ENCODE measurements at regions of chr6 and their contacts with region 1.

Region 1: GRCh38 chr6:4358414-4359114 is 223.2 kb upstream of the ECI2 start:
- DNase-seq: peak; percentile 74
- H3K4me3 ChIP-seq: no peak overlapping the region
- H3K27ac ChIP-seq: peak overlapping the region in 1 of 2 donors; percentile 54
- H3K4me1 ChIP-seq: no peaks in the 10 kb centered on the region
- H3K27me3 ChIP-seq: no peaks in the 10 kb centered on the region
- CTCF ChIP-seq: no peak
- POLR2A ChIP-seq: no peak

Region 2: GRCh38 chr6:4460586-4461475 is 102.3 kb after region 1 on chr6:
- intact Hi-C with region 1: loop called (anchors 10 kb)
- DNase-seq: peak; percentile 49
- H3K4me3 ChIP-seq: no peak overlapping the region
- H3K27ac ChIP-seq: peak overlapping the region; percentile 29 to 36
- H3K4me1 ChIP-seq: no peaks in the 10 kb centered on the region
- H3K27me3 ChIP-seq: no peaks in the 10 kb centered on the region
- CTCF ChIP-seq: no peak
- POLR2A ChIP-seq: no peak

Region 3: DNA sequence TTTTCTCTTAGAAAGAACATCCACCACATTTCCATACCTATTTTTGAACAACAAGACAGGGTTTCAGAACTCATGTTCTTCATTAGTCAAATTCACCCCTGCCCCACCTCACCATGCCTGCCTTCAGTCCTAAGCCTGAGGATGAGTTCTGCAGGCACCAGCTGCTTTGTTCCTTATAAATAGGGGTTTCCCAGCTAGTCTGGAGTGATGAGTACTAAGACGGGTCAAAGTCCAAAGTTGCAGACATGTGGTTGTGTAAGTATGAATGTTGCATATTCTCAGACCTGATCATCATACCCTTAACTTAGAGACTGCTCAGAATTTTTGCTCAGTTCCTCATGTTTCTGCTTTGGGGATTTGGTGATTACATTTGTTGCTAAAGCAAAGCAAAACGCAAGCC is 159.9 kb after region 1 on chr6:
- intact Hi-C with region 1: no loop called
- DNase-seq: no peak
- H3K4me3 ChIP-seq: no peak overlapping the region
- H3K27ac ChIP-seq: no peak overlapping the region
- H3K4me1 ChIP-seq: no peaks in the 10 kb centered on the region
- H3K27me3 ChIP-seq: no peaks in the 10 kb centered on the region
- CTCF ChIP-seq: no peak
- POLR2A ChIP-seq: no peak

Region 4: GRCh38 chr6:5025911-5026819 is 667.6 kb after region 1 on chr6:
- intact Hi-C with region 1: loop called (anchors 10 kb)
- DNase-seq: peak; percentile 48
- H3K4me3 ChIP-seq: peak overlapping the region; percentile 42 to 45
- H3K27ac ChIP-seq: peak overlapping the region; percentile 62 to 73
- H3K4me1 ChIP-seq: no peaks in the 10 kb centered on the region
- H3K27me3 ChIP-seq: no peaks in the 10 kb centered on the region
- CTCF ChIP-seq: peak in 2 of 4 experiments; percentile 7 to 14
- POLR2A ChIP-seq: no peak

Measured in prostate gland (tissue), 2 donors.